ENCODE measurements at regions of chr15 and their contacts with region 1.

Region 1: DNA sequence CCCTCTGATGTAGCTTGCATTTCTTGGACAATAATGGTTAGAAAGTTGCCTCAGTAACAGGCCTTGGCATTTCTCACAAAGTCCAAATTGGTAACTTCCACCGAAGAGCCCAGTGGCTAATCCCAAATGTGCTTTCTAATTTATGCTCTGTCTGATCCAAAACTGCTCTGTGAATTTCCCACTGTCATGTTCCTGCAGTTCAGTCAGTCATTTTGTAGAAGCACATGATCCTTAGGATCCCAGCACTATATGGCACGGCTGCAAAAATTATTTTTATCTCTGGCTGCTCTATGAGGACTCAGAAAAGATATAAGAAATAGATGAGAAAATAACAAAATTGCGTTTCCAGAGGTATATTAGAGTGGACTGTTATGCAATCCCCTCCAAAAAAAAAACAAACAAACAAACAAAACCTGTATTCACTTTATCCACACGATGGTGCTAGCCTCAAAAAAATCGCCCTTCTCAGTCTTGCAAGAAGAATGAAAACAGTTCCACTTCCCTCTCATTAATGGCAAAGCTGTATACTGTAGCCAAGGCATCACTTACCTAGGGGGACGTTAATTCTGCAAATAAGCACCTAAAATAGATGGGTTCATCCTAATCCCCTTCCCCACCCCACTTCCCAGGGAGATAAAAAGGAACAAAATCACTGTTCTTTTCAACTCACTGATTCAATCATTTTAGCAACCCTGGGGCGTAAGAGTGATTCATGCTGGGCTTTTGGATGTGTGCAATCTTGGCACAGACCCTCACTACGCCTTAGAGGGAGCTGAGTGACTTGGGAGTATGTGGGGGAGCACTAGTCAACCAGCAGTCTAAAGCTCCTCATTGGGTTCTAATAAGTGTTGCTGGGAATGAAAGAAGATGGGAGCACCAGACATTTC is 61.3 kb downstream of the TMCO5A start:
- DNase-seq: peak in 4 of 7 donors; percentile 41 to 59 (median 54)
- H3K4me3 ChIP-seq: no peak overlapping the region
- H3K27ac ChIP-seq: no peak overlapping the region
- H3K4me1 ChIP-seq: peaks cover 0 to 3% of the 10 kb centered on the region in 2 donors
- H3K27me3 ChIP-seq: no peaks in the 10 kb centered on the region
- CTCF ChIP-seq: peak; percentile 42 to 97 (median 66)
- POLR2A ChIP-seq: no peak

Region 2: GRCh38 chr15:37771465-37771864 is 224.2 kb before region 1 on chr15:
- intact Hi-C with region 1: no loop called
- DNase-seq: no peak
- H3K4me3 ChIP-seq: no peak overlapping the region
- H3K27ac ChIP-seq: no peak overlapping the region
- H3K4me1 ChIP-seq: no peaks in the 10 kb centered on the region
- H3K27me3 ChIP-seq: no peaks in the 10 kb centered on the region
- CTCF ChIP-seq: no peak
- POLR2A ChIP-seq: no peak

Region 3: GRCh38 chr15:38320181-38320580 is 324.5 kb after region 1 on chr15:
- intact Hi-C with region 1: no loop called
- DNase-seq: no peak
- H3K4me3 ChIP-seq: no peak overlapping the region
- H3K27ac ChIP-seq: no peak overlapping the region
- H3K4me1 ChIP-seq: peaks cover 0 to 14% of the 10 kb centered on the region in 2 donors
- H3K27me3 ChIP-seq: no peaks in the 10 kb centered on the region
- CTCF ChIP-seq: no peak
- POLR2A ChIP-seq: no peak

Region 4: GRCh38 chr15:38389924-38390542 is 394.3 kb after region 1 on chr15:
- intact Hi-C with region 1: loop called (anchors 10 kb)
- DNase-seq: peak; percentile 52 to 84 (median 66)
- H3K4me3 ChIP-seq: no peak overlapping the region
- H3K27ac ChIP-seq: no peak overlapping the region
- H3K4me1 ChIP-seq: no peaks in the 10 kb centered on the region
- H3K27me3 ChIP-seq: no peaks in the 10 kb centered on the region
- CTCF ChIP-seq: peak; percentile 65 to 84 (median 72)
- POLR2A ChIP-seq: no peak

Region 5: DNA sequence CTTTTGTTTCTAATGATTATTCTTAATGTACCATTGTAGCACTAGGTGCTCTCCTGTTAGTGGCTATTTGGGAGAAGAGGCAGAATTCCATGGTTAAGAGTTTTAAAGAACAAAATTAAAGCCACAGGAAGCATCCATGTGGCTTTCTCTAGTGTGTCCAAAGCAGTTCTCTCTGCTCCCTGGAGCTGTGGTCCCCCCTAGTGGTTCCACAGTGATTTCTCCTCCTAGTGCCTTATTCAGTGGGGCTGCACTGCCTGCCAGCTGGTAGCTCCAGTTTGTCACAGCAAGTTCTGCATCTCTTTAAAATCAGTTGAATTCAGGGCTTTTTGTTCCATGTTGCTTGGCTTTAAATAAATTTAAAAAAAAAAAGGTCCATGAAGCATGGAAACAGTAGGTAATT is 418.7 kb after region 1 on chr15:
- intact Hi-C with region 1: loop called in 1 of 2 experiments (anchors 10 kb)
- DNase-seq: peak; percentile 33 to 60 (median 52)
- H3K4me3 ChIP-seq: no peak overlapping the region
- H3K27ac ChIP-seq: no peak overlapping the region
- H3K4me1 ChIP-seq: no peaks in the 10 kb centered on the region
- H3K27me3 ChIP-seq: peaks cover 10% of the 10 kb centered on the region
- CTCF ChIP-seq: peak; percentile 27 to 58 (median 48)
- POLR2A ChIP-seq: no peak

Measured in adrenal gland (tissue), 19 donors.